ENCODE measurements at regions of chr15 and their contacts with region 1.

Region 1: DNA sequence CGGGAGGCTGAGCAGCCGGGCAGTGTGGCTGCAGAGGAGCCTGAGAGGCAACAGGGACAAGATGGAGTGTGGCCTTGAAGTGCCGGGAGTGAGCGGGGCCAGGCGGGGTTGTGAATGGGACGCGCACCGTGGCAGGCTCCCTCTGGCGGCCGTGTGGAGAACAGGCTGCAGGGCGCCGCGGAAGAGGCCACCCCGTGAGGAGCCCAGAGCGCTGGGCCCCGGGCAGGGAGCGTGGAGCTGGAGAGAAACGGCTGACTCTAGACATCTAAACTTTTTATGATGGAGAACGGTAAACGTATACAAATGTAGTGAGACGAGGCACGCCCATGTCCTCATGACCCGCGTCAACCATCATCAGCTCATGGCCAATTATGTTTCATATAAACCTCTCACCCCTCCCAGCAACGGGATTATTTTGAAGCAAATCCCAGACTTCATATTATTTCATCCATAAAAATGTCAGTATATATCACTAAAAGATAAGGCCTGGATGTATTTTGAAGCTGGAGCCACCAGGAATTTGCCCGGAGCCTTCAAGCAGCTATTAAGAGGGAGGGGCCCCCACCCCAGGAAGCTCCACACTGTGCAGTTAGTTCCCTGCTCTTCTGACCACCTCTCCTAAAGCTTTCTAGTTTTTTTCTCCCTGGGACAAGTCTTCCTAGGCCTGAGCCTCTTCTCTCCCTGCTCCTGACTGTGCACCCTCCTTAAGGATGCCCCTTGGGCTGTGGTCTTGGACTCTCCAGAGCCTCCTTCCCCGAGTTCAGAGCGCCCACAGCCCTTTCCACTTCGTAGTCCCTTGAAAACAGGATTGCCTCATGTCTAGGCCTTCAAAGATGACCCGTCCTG is 149.4 kb downstream of the SMAD6 start:
- DNase-seq: peak; percentile 69
- H3K4me3 ChIP-seq: no peak overlapping the region
- H3K27me3 ChIP-seq: no peaks in the 10 kb centered on the region
- CTCF ChIP-seq: peak; percentile 98

Region 2: DNA sequence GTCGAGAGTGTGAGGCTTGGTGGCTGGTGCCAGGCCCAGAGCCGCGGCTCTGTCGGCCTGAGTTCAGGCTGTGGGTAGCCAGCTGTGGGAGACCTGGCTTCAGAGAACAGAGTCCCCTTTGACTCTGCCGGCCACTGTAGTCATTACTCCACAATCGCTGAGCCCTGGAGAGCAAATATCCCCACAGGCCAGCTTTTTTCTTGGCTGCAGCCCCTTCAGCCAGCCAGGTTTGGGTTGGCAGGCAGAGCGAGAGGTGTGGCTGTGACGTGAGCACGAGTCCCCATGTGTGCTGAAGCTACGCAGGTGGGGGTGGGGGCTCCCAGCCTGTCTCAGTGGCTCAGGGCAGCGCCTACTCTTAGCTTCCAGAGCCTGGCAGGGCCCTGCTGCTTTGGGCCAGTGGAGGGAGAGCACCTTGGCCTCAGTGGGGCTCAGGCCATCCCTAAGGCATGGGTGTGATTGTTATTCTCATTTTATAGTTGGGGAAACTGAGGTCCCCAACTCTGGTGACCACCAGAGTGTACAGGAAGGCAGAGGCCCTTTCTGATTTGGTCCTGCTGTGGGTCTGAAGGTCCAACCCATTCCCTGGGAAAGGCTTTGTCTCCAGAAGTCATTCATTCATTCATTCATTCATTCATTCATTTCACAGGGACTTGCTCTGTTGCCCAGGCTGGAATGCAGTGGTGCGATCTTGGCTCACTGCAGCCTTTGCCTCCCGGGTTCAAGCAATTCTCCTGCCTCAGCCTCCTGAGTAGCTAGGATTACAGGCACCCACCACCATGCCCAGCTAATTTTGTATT is 240.0 kb before region 1 on chr15:
- CTCF ChIA-PET with region 1: interaction called, 60 read pairs
- POLR2A ChIA-PET with region 1: interaction called, 4 read pairs
- DNase-seq: no peak
- H3K4me3 ChIP-seq: no peak overlapping the region
- H3K27me3 ChIP-seq: no peaks in the 10 kb centered on the region
- CTCF ChIP-seq: no peak

Region 3: GRCh38 chr15:66700802-66701421 is 150.5 kb before region 1 on chr15:
- CTCF ChIA-PET with region 1: interaction called, 118 read pairs
- POLR2A ChIA-PET with region 1: interaction called, 3 read pairs
- DNase-seq: no peak
- H3K4me3 ChIP-seq: peak overlapping the region; percentile 82
- H3K27me3 ChIP-seq: no peaks in the 10 kb centered on the region
- CTCF ChIP-seq: no peak

Region 4: DNA sequence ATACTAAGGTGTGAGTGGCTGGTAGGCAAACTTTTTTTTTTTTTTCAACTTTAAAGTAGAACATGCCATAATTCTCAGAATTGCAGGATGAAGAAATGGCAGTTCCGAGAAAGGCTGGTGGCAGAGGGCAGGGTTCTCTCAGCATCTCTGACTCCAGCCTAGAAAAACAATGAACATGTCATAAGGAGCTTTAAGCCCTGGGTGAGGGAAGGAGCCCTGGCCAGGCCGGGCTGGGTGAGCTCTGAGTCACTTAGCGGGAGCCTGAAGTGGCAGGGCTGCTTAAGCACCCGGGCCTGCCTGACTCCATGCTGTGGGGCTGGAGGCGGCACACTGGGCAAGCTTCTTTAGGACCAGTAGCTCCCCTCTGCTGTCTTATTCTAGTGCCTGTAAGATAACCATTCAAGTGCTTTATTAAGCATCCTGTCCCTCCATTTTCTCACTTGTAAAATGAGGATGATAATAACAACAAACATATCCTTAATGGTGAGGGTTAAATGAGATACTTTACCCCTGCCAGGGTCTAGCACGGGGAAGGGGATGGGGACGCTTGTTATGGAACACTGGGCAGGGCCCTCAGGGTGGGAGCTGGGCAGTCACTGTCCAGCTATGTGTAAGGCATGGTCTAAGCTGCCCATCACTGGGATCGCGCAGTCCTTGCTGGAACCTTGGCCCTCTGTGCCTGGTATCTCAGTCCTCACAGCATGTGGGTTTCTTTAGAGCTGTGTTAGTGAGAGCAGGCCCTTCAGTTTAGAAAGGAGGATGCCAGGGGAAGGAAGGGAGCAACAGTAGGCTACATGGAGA is 131.0 kb before region 1 on chr15:
- CTCF ChIA-PET with region 1: interaction called, 19 read pairs
- POLR2A ChIA-PET with region 1: interaction called, 3 read pairs
- DNase-seq: no peak
- H3K4me3 ChIP-seq: no peak overlapping the region
- H3K27me3 ChIP-seq: no peaks in the 10 kb centered on the region
- CTCF ChIP-seq: no peak

Region 5: GRCh38 chr15:66774001-66774814 is 77.2 kb before region 1 on chr15:
- CTCF ChIA-PET with region 1: interaction called, 105 read pairs
- POLR2A ChIA-PET with region 1: no interaction called
- DNase-seq: no peak
- H3K4me3 ChIP-seq: no peak overlapping the region
- H3K27me3 ChIP-seq: no peaks in the 10 kb centered on the region
- CTCF ChIP-seq: peak; percentile 95

Region 6: DNA sequence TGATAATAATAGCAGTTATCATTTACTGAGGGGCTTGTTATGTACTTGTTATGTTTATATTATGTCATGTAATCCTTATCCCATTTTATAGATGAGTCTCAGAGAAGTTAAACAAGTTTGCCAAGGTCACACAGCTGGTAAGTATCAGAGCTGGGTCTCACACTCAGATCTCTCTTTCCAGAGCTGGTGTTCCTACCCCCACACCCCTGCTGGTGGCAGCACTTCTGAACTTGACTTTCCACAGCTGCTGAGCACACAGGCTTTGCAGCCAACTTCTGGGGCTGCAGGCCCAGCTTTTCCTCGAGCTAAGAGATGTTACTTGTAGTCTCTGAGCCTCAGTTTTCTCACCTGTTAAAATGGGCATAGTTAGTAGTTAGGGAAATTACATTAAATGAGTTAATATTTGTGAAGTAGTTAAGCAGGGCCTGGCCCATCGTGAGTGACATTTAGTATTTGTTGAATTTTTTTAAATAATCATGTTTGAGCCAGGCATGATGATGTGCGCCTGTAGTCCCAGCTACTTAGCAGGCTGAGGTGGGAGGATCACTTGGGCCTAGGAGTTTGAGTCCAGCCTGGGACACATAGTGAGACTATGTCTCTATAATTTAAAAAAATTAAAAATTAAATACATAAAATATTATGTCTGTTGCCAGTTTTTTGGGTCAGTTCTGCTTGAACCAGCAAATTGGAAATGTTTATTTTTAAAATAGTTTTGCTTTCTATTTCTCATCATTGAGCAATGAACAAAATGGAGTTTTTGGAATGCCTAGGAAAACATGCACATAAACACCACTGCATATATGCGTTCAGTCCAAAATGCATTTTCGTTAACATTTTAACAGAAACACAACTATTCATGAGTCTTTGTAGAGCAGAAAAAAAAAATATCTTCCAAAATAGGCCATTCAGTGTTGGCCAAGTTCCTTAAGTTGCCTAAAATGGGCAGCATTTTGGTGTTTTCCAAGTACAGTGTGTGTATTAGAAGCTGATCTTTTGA is 62.1 kb before region 1 on chr15:
- CTCF ChIA-PET with region 1: interaction called, 62 read pairs
- POLR2A ChIA-PET with region 1: no interaction called
- DNase-seq: no peak
- H3K4me3 ChIP-seq: no peak overlapping the region
- H3K27me3 ChIP-seq: no peaks in the 10 kb centered on the region
- CTCF ChIP-seq: peak; percentile 68

Region 7: DNA sequence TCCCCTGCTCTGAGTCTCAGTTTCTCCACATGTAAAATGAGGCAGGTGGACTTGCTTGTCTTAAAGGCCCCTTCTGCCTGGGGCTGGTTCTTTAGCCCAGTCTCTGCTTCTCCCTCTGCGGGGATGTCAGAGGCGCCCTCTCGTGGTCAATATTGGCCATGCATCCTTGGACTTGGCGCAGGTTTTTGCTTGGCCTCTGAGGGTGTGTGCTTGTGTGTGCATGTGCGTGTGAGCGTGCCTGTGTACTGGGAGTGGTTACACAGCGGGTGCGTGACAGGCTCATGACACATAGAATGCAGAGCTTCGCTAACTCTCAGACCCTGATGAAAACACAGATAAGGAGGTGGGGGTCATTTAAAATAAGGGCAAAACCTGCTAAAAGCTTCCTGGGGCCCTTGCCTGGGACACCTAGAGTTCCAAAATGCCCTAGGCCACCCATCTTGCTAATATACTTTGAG is 11.5 kb after region 1 on chr15:
- CTCF ChIA-PET with region 1: interaction called, 26 read pairs
- POLR2A ChIA-PET with region 1: no interaction called
- DNase-seq: peak; percentile 68
- H3K4me3 ChIP-seq: no peak overlapping the region
- H3K27me3 ChIP-seq: no peaks in the 10 kb centered on the region
- CTCF ChIP-seq: peak; percentile 97